PC-9 (cell line): ENCODE measurements at regions of chr5 and their contacts with region 1.

Region 1: GRCh38 chr5:80672140-80672736 is 17.5 kb upstream of the DHFR start:
- DNase-seq: peak; percentile 57 to 58
- H3K4me3 ChIP-seq: no peak overlapping the region
- H3K27ac ChIP-seq: no peak overlapping the region
- H3K4me1 ChIP-seq: no peaks in the 10 kb centered on the region
- H3K27me3 ChIP-seq: no peaks in the 10 kb centered on the region
- CTCF ChIP-seq: peak; percentile 91

Region 2: DNA sequence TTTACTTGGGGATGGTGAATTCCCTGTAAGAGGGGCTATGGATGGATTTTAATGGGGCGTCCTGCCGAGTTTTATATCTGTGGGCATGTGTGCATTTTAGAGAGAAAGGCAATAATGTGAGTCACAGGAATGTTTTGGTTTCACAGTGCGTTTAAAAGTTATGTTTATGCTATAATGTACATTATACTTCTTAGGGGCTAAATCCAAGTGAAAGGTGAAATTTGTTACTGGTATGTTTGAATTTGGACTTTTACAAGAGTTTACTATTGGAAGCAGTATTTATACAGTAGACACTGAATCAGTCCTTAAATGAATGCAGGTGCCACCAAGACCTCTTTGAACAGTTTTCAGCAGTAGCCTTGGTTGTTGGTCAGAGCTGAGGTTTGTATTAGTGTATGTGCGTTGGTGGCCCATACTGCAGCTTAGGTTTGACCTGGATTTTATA is 1430.7 kb before region 1 on chr5:
- CTCF ChIA-PET with region 1: no interaction called
- POLR2A ChIA-PET with region 1: interaction called, 12 read pairs
- intact Hi-C with region 1: no loop called
- DNase-seq: no peak
- H3K4me3 ChIP-seq: peak overlapping the region; percentile 23; the same call in 1 of the 2 replicates
- H3K27ac ChIP-seq: no peak overlapping the region
- H3K4me1 ChIP-seq: peaks cover 17% of the 10 kb centered on the region
- H3K27me3 ChIP-seq: no peaks in the 10 kb centered on the region
- CTCF ChIP-seq: no peak

Region 3: DNA sequence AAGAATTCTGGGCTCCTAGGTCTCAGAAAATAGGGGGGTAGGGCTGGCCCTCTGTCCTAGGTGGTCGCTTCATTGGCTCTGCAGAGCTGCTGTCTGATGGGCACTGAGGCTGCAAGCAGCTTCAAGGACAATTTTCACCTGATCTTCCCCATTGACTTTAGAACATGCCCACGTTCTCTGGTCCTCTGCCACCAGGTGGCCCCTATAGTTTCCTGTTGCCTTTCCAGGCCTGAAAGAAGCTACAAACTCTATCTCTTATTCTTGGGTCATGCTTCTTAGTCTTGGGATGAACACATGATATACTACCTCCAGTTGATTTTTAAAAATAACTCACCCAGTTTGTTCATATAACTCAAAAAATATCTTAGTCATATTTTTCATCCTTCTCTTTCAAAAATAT is 326.2 kb before region 1 on chr5:
- CTCF ChIA-PET with region 1: interaction called, 4 read pairs
- POLR2A ChIA-PET with region 1: no interaction called
- intact Hi-C with region 1: loop called (anchors 5 kb)
- DNase-seq: peak; percentile 18 to 47
- H3K4me3 ChIP-seq: no peak overlapping the region
- H3K27ac ChIP-seq: no peak overlapping the region
- H3K4me1 ChIP-seq: no peaks in the 10 kb centered on the region
- H3K27me3 ChIP-seq: no peaks in the 10 kb centered on the region
- CTCF ChIP-seq: peak; percentile 72

Region 4: GRCh38 chr5:80481019-80481893 is 191.0 kb before region 1 on chr5:
- CTCF ChIA-PET with region 1: interaction called, 7 read pairs
- POLR2A ChIA-PET with region 1: no interaction called
- intact Hi-C with region 1: loop called (anchors 1 kb)
- DNase-seq: peak; percentile 23 to 36
- H3K4me3 ChIP-seq: no peak overlapping the region
- H3K27ac ChIP-seq: no peak overlapping the region
- H3K4me1 ChIP-seq: 0 out of 2 replicates have a peak, but pooled peaks cover under 1% of the 10 kb centered on the region
- H3K27me3 ChIP-seq: no peaks in the 10 kb centered on the region
- CTCF ChIP-seq: peak; percentile 78

Region 5: GRCh38 chr5:80703747-80704146 is 31.5 kb after region 1 on chr5:
- CTCF ChIA-PET with region 1: no interaction called
- POLR2A ChIA-PET with region 1: interaction called, 12 read pairs
- intact Hi-C with region 1: no loop called
- DNase-seq: no peak
- H3K4me3 ChIP-seq: no peak overlapping the region
- H3K27ac ChIP-seq: no peak overlapping the region
- H3K4me1 ChIP-seq: no peaks in the 10 kb centered on the region
- H3K27me3 ChIP-seq: no peaks in the 10 kb centered on the region
- CTCF ChIP-seq: no peak

Region 6: GRCh38 chr5:80781356-80781755 is 109.1 kb after region 1 on chr5:
- CTCF ChIA-PET with region 1: no interaction called
- POLR2A ChIA-PET with region 1: no interaction called
- intact Hi-C with region 1: no loop called
- DNase-seq: peak in 1 of 2 experiments; percentile 50
- H3K4me3 ChIP-seq: no peak overlapping the region
- H3K27ac ChIP-seq: no peak overlapping the region
- H3K4me1 ChIP-seq: peaks cover 9% of the 10 kb centered on the region
- H3K27me3 ChIP-seq: no peaks in the 10 kb centered on the region
- CTCF ChIP-seq: no peak